Activated T-helper 1 cell treated with anti-CD3 and anti-CD28 coated beads, Interleukin-12 subunit alpha, Interleukin-12 subunit beta, Interleukin-2, Interleukin-4 antibody, amounts not matched to agents 30 ng/mL and 10 ng/mL and 1 ng/mL, durations not matched to agents 14 hours and 24 hours and 36 hours (primary cell): ENCODE measurements at regions of chr10 and their contacts with region 1.

Region 1: GRCh38 chr10:32958085-32959005 is at the start of gene ITGB1:
- DNase-seq: peak; percentile 81
- H3K4me3 Mint-ChIP-seq: peak within 1 kb of the TSS; percentile 86
- H3K27ac Mint-ChIP-seq: peak within 1 kb of the TSS; percentile 93
- H3K4me1 Mint-ChIP-seq: peaks cover 35% of the 10 kb centered on the region
- H3K27me3 Mint-ChIP-seq: peaks cover 12% of the 10 kb centered on the region
- total RNA-seq, gene ITGB1: 51.4 and 61.4 TPM in 2 replicates

Region 2: DNA sequence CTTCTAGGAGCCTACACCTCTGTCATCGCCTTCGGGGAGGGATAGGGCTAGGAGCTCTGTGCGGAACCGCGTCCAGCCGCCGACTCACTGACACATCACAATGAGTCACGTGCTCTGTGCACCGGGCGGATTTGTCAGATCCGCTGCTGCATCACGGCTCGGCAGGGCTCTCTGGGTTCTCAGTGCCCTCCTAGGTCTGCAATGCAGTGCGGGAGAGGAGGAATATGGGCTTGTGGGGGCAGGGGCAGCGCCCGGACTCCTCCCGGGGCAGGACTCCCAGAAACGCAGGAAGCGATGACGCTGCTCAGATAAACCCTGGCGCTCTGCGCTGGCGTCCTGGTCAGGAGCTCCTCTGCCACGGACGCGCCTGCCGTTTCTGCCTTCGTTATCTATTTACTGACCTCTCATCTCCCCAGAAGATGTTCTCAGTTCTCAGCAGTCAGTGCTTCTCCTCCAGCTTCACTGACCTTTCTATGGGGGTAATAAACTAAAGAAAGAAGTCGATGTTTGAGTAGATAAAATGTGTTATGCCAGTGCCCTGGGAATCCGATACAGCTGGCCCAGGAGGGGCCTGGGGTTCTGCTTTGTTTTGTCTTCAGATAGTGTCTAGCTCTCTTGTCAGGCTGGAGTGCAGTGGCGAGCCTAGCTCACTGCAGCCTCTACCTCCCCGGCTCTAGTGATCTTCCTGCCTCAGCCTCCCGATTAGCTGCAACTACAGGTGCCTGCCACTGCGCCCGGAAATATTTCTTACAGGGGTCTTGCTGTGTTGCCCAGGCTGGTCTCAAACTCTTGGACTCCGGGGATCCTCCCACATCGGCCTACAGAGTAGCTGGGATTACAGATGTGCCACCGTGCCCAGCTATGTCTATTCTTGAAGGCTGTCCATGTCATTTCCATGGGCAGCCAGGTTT is 22.5 kb after region 1 on chr10:
- intact Hi-C with region 1: loop called (anchors 1 kb)
- DNase-seq: peak; percentile 68
- H3K4me3 Mint-ChIP-seq: peak overlapping the region; percentile 88
- H3K27ac Mint-ChIP-seq: peak overlapping the region; percentile 88
- H3K4me1 Mint-ChIP-seq: peaks cover 28% of the 10 kb centered on the region
- H3K27me3 Mint-ChIP-seq: no peaks in the 10 kb centered on the region

Region 3: DNA sequence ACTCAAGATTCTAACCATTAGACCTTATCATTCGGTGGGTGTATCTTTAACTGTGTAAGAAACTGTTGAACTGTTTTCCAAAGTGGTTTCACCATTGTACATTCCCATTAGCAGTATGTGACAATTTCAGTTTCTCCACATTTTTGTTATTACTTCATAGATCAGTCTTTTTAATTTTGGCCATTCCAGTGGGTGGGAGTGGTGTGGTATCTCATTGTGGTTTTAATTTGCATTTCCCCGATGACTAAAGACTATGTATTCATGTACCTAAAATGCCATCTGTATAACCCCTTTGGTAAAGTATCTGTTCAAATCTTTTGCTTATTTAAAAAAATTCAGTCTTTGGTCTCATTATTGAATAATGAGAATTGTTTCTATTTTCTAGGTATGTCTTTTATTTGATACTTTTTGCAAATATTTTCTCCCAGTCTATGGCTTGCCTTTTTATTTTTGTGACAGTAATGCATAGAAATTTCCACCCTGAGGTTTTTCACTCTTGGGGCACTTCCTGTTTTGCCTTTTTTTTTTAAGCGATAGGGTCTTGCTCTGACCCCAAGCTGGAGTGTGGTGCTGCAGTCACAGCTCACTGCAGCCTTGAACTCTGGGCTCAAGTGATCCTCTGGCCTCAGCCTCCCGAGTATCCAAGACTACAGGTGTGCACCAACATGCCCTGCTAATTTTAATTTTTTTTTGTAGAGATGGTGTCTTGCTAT is 140.8 kb after region 1 on chr10:
- intact Hi-C with region 1: loop called (anchors 1 kb)
- DNase-seq: no peak
- H3K4me3 Mint-ChIP-seq: no peak overlapping the region
- H3K27ac Mint-ChIP-seq: peak overlapping the region; percentile 73
- H3K4me1 Mint-ChIP-seq: peaks cover 30% of the 10 kb centered on the region
- H3K27me3 Mint-ChIP-seq: peaks cover 2% of the 10 kb centered on the region

Region 4: GRCh38 chr10:33132626-33133025 is 174.3 kb after region 1 on chr10:
- intact Hi-C with region 1: no loop called
- DNase-seq: no peak
- H3K4me3 Mint-ChIP-seq: no peak overlapping the region
- H3K27ac Mint-ChIP-seq: no peak overlapping the region
- H3K4me1 Mint-ChIP-seq: peaks cover 55% of the 10 kb centered on the region
- H3K27me3 Mint-ChIP-seq: no peaks in the 10 kb centered on the region

Region 5: DNA sequence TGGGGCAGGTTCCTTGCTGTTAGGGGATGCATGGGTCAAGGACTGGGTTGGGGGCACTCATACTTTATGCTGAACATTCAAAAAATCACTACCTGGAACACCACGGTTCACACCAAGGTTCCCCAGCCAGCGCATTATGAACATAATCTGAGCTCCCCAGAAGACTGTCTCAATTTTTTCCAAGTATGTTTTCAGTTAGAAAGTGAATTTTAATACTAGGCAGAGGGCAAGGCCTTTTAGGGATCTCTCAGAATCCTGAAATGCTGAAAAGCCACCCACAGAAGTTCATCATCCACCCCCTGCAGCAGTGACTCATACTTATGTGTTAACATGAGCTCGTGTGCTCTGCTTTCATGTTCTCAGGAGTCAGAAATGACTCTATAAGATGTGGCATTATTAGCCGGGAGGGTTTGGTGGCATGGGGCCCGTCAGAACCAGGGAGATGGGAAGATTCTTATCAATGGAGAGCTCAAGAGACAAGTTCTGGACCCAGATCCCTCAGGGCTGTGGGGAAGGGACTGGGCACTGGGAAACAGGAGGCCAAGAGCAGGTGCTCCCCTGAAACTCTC is 184.9 kb after region 1 on chr10:
- intact Hi-C with region 1: loop called (anchors 1 kb)
- DNase-seq: peak; percentile 31
- H3K4me3 Mint-ChIP-seq: no peak overlapping the region
- H3K27ac Mint-ChIP-seq: peak overlapping the region; percentile 70
- H3K4me1 Mint-ChIP-seq: peaks cover 49% of the 10 kb centered on the region
- H3K27me3 Mint-ChIP-seq: no peaks in the 10 kb centered on the region